H1 (cell line): ENCODE measurements at regions of chr17 and their contacts with region 1.

Region 1: GRCh38 chr17:8041249-8041928 is 2.5 kb downstream of the ALOX15B start:
- DNase-seq: no peak
- H3K4me3 ChIP-seq: no peak overlapping the region
- H3K27ac ChIP-seq: no peak overlapping the region
- H3K4me1 ChIP-seq: peaks cover 0 to 10% (median 6%) of the 10 kb centered on the region in 4 experiments; a peak in 5 of 7 replicates
- H3K27me3 ChIP-seq: peaks cover 0 to 9% (median 4%) of the 10 kb centered on the region in 4 experiments; a peak in 3 of 7 replicates
- CTCF ChIP-seq: peak in 2 of 3 experiments; percentile 59 to 72; a peak in 3 of 4 replicates
- EP300 ChIP-seq: no peak
- POLR2A ChIP-seq: no peak
- RAD21 ChIP-seq: peak; percentile 86 to 87

Region 2: GRCh38 chr17:7873051-7873450 is 168.3 kb before region 1 on chr17:
- CTCF ChIA-PET with region 1: no interaction called
- POLR2A ChIA-PET with region 1: no interaction called
- DNase-seq: no peak
- H3K4me3 ChIP-seq: no peak overlapping the region
- H3K27ac ChIP-seq: no peak overlapping the region
- H3K4me1 ChIP-seq: no peaks in the 10 kb centered on the region
- H3K27me3 ChIP-seq: no peaks in the 10 kb centered on the region
- CTCF ChIP-seq: no peak
- EP300 ChIP-seq: no peak
- POLR2A ChIP-seq: no peak
- RAD21 ChIP-seq: no peak

Region 3: DNA sequence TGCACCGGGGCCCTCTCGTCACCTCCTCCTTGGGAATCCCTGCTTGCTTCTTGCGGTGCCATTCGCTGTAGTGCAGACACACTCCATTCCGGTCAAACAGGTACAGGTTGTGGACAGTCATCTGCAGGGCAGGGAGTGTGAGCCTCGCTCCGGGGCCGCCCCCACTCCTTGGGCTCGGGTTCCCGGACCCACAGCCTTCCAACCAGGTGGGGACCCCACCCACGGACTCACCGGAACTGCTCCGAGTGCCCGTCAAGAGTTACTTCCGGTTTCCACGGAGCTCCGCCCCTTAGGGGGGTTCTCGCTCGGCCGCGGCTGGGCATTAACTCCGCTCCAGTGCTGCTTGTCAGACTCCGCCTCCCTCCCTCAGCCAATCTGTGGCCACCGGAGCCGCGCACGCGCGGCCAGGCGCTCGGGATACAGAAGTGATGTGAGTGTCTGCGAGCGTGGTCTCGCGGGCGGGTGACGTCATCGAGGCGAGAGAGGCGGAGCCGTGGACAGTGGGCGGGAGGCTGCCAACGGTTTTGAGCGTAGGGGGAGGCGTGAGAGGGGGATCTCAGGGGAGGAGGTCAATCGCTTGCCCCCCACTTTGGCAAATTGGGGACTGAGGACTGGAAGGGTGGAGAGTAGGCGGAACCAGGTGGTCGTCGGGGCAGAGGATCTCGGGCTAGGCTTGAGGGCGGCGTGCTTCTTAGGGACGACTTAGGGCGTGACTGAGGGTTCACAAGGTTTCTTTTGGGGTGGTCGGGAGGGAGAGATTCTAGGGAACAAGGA is 109.5 kb before region 1 on chr17 and contains the starts of genes CNTROB and TRAPPC1:
- CTCF ChIA-PET with region 1: interaction called, 15 read pairs
- POLR2A ChIA-PET with region 1: interaction called, 4 read pairs
- DNase-seq: peak; percentile 90 to 98
- H3K4me3 ChIP-seq: peak within 1 kb of the TSS; percentile 80 to 95 (median 89)
- H3K27ac ChIP-seq: peak within 1 kb of the TSS; percentile 16; the same call in 1 of the 2 replicates
- H3K4me1 ChIP-seq: peaks cover 0 to 5% (median 3%) of the 10 kb centered on the region in 4 experiments; a peak in 4 of 7 replicates
- H3K27me3 ChIP-seq: peaks cover 11 to 28% (median 25%) of the 10 kb centered on the region in 4 experiments
- CTCF ChIP-seq: peak in 1 of 3 experiments; percentile 6; a peak in 1 of 4 replicates
- EP300 ChIP-seq: no peak
- POLR2A ChIP-seq: no peak
- RAD21 ChIP-seq: no peak
- total RNA-seq, gene CNTROB: 30.0 and 31.9 TPM in 2 replicates
- total RNA-seq, gene TRAPPC1: 99.3 and 114 TPM in 2 replicates

Region 4: DNA sequence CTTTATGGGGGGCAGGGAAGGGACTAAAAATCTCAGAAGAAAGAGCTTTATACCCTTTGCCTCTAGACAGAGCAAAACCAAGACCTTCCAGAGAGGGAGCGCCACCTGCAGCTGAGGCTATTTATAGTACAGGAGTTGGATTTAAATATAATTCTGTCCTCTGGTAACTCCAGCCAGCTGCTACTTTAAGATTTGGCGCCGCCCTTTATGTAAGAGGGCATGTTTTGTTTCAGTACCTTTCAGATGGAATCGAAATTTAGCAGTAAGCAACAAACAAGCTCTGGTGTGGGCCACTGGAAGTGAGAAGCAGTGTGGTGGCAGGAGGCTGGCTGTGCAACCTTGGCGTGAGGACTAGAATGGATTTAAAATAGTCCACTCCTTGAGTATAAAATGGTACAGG is 44.2 kb before region 1 on chr17:
- CTCF ChIA-PET with region 1: interaction called, 18 read pairs
- POLR2A ChIA-PET with region 1: no interaction called
- DNase-seq: no peak
- H3K4me3 ChIP-seq: no peak overlapping the region
- H3K27ac ChIP-seq: no peak overlapping the region
- H3K4me1 ChIP-seq: peaks cover 0 to 2% (median 0%) of the 10 kb centered on the region in 4 experiments; a peak in 1 of 7 replicates
- H3K27me3 ChIP-seq: peaks cover 5 to 14% (median 6%) of the 10 kb centered on the region in 4 experiments
- CTCF ChIP-seq: peak in 2 of 3 experiments; percentile 66 to 81; a peak in 3 of 4 replicates
- EP300 ChIP-seq: no peak
- POLR2A ChIP-seq: no peak
- RAD21 ChIP-seq: peak; percentile 48 to 55

Region 5: DNA sequence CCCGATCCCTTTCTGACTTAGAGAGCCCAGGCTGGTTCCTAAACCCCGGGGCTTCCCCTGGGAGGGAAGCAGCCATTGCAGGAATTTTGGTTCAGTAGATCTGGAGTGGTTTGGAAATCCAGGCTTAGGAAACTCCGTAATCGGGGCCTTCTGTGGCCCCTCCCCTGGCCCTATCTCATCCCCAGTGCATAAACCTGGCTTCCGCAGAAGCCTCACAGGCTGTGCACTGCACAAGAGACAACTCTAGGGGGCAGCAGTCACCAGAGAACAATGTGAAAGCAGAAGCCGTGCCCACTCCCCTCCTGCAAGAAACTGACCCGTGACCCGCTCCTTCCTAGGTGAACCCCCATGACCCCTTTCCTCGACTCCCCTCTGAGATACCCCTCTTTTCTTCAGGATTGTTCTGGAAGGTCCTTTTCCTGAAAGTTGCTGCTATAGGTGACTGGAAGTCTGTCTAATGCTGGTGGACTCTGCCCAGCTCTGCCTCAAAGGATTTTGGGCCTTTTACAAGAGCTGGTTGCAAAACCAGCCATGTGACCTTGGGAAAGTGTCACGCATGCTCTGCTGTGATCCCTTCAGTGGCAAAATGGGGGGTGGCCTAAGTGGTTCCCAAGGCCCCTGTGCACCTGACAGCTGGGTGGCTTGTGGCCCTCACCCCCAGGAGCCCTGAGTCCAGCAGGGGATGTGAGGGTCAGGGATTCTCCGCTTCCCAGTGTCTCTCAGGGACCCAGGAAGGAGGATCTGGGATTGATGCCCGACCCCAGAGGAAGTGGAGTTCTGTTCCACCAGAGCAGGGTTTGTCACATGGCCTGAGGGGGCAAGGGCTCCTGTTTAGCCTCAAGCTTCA is 24.5 kb before region 1 on chr17:
- CTCF ChIA-PET with region 1: interaction called, 141 read pairs
- POLR2A ChIA-PET with region 1: interaction called, 9 read pairs
- DNase-seq: peak; percentile 41 to 91
- H3K4me3 ChIP-seq: peak overlapping the region; percentile 53 to 80 (median 66)
- H3K27ac ChIP-seq: no peak overlapping the region
- H3K4me1 ChIP-seq: peaks cover 0 to 5% (median 0%) of the 10 kb centered on the region in 4 experiments; a peak in 2 of 7 replicates
- H3K27me3 ChIP-seq: peaks cover 5 to 35% (median 21%) of the 10 kb centered on the region in 4 experiments
- CTCF ChIP-seq: peak; percentile 84 to 93 (median 89)
- EP300 ChIP-seq: no peak
- POLR2A ChIP-seq: no peak
- RAD21 ChIP-seq: peak; percentile 84 to 89

Region 6: GRCh38 chr17:8073627-8074484 is 32.5 kb after region 1 on chr17:
- CTCF ChIA-PET with region 1: interaction called, 14 read pairs
- POLR2A ChIA-PET with region 1: interaction called, 3 read pairs
- DNase-seq: peak in 1 of 2 experiments; percentile 93
- H3K4me3 ChIP-seq: peak overlapping the region; percentile 11 to 65 (median 45); a peak in 6 of 8 replicates
- H3K27ac ChIP-seq: no peak overlapping the region
- H3K4me1 ChIP-seq: peaks cover 0 to 22% (median 9%) of the 10 kb centered on the region in 4 experiments; a peak in 5 of 7 replicates
- H3K27me3 ChIP-seq: peaks cover 39 to 79% (median 62%) of the 10 kb centered on the region in 4 experiments
- CTCF ChIP-seq: peak; percentile 80 to 98 (median 98)
- EP300 ChIP-seq: no peak
- POLR2A ChIP-seq: no peak
- RAD21 ChIP-seq: peak; percentile 43 to 53; a peak in 3 of 4 replicates

Region 7: DNA sequence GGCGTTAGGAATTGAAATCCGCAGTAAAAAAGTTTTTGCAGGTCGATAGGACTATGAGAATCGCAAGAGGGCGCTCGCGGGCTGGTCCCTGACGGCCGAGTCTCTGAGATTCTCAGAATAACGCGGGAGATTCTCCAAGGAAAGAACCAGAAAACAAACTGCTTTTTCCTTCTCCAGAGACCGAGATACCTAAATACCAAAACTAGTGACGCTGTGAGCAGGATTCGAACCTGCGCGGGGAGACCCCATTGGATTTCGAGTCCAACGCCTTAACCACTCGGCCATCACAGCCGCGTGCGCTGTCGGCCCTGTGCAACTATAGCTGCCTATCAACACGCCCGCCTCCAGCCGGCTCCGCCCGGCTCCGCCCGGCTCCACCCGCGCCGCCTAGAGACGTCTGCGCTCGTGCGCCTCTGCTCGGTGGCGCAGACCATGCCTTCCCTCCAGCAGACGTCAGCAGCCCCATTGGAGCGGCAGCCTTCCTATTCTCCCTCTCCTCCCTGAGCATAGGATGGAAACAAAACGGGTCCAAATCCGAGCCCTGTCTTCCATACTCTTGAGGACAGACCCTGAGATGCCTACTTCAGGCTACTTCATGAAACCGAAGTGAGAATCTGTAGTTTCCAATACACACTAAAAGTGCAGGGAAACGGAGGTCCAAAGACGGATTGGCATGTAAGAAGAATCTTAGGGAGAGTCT is 97.4 kb after region 1 on chr17:
- CTCF ChIA-PET with region 1: no interaction called
- POLR2A ChIA-PET with region 1: no interaction called
- DNase-seq: peak; percentile 94 to 100
- H3K4me3 ChIP-seq: peak overlapping the region; percentile 86 to 98 (median 92)
- H3K27ac ChIP-seq: peak overlapping the region; percentile 81
- H3K4me1 ChIP-seq: peaks cover 0 to 7% (median 4%) of the 10 kb centered on the region in 4 experiments; a peak in 4 of 7 replicates
- H3K27me3 ChIP-seq: peaks cover 0 to 7% (median 2%) of the 10 kb centered on the region in 4 experiments; a peak in 4 of 7 replicates
- CTCF ChIP-seq: peak; percentile 63 to 96 (median 78)
- EP300 ChIP-seq: peak in 1 of 2 experiments; percentile 89; a peak in 1 of 3 replicates
- POLR2A ChIP-seq: peak in 1 of 2 experiments; percentile 59; a peak in 1 of 3 replicates
- RAD21 ChIP-seq: peak; percentile 58 to 62